Activated CD8-positive, alpha-beta memory T cell treated with anti-CD3 and anti-CD28 coated beads, Interleukin-2, amount 10 ng/mL, durations not matched to agents 7 days and 5 days (primary cell): ENCODE measurements at regions of chr15 and their contacts with region 1.

Region 1: GRCh38 chr15:65869127-65869953 is at the start of gene RAB11A:
- DNase-seq: peak; percentile 97
- ATAC-seq: peak; percentile 94
- H3K4me3 Mint-ChIP-seq: peak within 1 kb of the TSS; percentile 98
- H3K27ac Mint-ChIP-seq: peak within 1 kb of the TSS; percentile 99
- H3K4me1 Mint-ChIP-seq: peaks cover 27% of the 10 kb centered on the region
- H3K27me3 Mint-ChIP-seq: no peaks in the 10 kb centered on the region
- total RNA-seq, gene RAB11A: 139 to 183 TPM

Region 2: GRCh38 chr15:65610871-65611718 is 258.2 kb before region 1 on chr15 and contains the start of gene INTS14:
- CTCF ChIA-PET with region 1: interaction called, 16 read pairs
- DNase-seq: peak; percentile 96
- ATAC-seq: peak; percentile 99
- H3K4me3 Mint-ChIP-seq: peak within 1 kb of the TSS; percentile 99
- H3K27ac Mint-ChIP-seq: peak within 1 kb of the TSS; percentile 97
- H3K4me1 Mint-ChIP-seq: peaks cover 52% of the 10 kb centered on the region
- H3K27me3 Mint-ChIP-seq: no peaks in the 10 kb centered on the region
- total RNA-seq, gene INTS14: 44.2 to 51.7 TPM

Region 3: DNA sequence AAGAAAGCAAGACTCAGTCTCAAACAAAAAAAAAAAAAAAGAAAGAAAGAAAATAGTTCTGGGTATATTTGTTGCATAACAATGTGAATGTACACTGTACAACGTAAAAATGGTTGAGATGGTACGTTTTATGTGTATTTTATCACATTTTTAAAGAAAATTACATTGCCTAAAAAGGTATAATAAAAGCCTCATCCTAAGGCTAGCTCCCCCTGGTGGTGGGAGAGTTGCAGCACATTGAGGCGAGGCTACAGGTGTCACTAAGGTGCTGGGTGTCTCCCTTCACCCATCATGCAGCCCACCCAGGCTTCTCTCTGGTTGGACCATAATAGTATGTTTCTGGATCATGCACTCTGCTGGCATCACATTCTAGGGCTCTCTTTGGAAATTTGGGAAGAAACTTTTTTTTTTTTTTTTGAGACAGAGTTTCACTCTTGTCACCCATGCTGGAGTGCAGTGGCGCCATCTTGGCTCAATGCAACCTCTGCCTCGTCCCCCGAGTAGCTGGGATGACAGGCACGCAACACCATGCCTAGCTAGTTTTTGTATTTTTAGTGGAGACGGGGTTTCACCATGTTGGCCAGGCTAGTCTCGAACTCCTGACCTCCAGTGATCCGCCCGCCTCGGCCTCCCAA is 12.4 kb before region 1 on chr15:
- CTCF ChIA-PET with region 1: interaction called, 20 read pairs
- DNase-seq: peak; percentile 89
- ATAC-seq: peak; percentile 89
- H3K4me3 Mint-ChIP-seq: no peak overlapping the region
- H3K27ac Mint-ChIP-seq: no peak overlapping the region
- H3K4me1 Mint-ChIP-seq: peaks cover 10% of the 10 kb centered on the region
- H3K27me3 Mint-ChIP-seq: peaks cover 12% of the 10 kb centered on the region

Region 4: DNA sequence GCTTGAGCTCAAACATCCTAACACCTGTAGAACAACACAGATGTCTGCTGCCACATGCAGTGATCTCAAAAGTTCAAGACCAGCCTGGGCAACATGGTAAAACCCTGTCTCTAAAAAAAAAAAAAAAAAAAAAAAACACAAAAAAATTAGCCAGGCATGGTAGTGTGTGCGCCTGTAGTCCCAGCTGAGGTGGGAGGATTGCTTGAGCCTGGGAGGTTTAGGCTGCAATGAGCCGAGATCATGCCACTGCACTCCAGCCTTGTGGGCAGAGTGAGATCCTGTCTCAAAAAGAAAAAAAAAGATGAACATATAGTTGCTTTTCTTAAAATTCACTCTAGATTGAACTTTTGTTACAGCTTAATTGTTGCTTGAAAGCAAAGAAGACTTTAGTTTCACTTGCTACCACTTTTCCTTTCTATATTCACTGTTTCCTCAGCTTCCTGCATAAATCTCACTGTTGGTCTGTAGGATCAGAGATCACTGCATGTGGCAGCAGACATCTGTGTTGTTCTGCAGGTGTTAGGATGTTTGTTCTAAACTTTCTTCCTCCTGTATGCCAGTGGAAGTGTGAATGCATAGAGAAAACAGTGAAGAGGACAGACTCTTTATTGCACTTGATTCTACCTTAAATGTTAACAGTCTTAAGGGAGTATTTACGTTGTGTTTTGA is 12.6 kb after region 1 on chr15:
- CTCF ChIA-PET with region 1: interaction called, 12 read pairs
- DNase-seq: no peak
- ATAC-seq: peak; percentile 39
- H3K4me3 Mint-ChIP-seq: peak overlapping the region; percentile 6
- H3K27ac Mint-ChIP-seq: peak overlapping the region; percentile 61
- H3K4me1 Mint-ChIP-seq: peaks cover 51% of the 10 kb centered on the region
- H3K27me3 Mint-ChIP-seq: no peaks in the 10 kb centered on the region

Region 5: GRCh38 chr15:65896236-65896635 is 26.9 kb after region 1 on chr15:
- CTCF ChIA-PET with region 1: no interaction called
- DNase-seq: no peak
- ATAC-seq: no peak
- H3K4me3 Mint-ChIP-seq: no peak overlapping the region
- H3K27ac Mint-ChIP-seq: no peak overlapping the region
- H3K4me1 Mint-ChIP-seq: peaks cover 2% of the 10 kb centered on the region
- H3K27me3 Mint-ChIP-seq: no peaks in the 10 kb centered on the region

Region 6: DNA sequence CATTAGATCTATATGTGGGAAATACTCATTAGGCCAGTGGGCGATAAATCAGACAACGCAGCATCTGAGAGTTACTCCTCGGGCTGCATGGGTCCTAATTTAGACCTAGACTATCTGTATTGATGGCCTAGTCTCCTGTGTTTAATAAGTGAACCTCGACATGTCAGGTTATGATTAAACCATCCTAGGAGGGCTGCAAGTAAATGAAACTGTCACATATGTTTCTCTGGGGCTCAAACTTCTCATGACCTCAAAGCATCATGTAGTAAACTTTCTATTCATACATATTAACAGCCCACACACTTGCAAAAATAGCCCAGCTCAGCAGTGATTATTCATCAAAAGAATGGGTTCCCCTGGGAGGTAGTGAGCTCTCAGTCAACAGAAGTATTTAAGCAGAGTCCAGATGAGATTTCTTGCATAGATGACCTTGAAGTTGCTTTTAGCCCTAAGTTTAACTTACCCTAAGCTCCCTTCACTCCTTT is 51.5 kb after region 1 on chr15:
- CTCF ChIA-PET with region 1: no interaction called
- DNase-seq: no peak
- ATAC-seq: no peak
- H3K4me3 Mint-ChIP-seq: no peak overlapping the region
- H3K27ac Mint-ChIP-seq: no peak overlapping the region
- H3K4me1 Mint-ChIP-seq: peaks cover 33% of the 10 kb centered on the region
- H3K27me3 Mint-ChIP-seq: no peaks in the 10 kb centered on the region